ENCODE measurements at regions of chr6 and their contacts with region 1.

Region 1: DNA sequence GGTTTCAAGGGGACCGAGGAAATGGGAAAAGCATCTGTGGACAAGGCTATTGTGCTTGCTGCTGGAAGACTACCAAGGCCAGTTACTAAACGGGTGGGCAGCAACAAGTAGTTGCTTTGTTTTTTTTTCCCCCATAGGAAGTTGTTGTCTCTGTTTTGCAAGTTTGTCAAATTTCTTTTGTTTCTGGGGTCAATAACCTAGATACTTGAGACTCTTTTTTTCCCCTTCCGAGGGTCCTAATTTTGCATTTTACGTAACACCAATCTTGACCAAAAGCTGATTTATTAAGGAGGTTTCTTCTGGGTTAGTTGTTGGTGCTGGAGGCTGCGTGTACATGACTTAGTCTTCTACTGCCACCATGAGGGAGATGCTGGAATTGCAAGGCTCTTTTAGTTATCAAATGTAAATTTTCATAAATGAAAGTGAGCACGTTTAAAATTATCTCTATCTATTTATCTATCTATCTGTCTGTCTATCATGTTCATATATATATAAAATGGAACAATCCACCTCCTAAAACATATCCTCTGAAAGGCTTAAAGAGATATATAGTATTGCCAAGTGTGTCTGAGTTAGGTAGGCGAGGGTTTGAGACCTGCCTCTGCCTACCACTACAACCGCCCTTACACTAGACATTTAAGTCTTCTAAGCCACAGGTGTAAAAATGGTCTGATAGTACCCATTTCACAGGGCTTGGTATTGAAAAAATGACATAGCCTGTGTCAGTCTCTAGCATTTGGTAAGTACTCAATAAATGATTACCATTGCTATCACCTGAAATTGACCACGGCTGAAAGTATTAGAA is 60.2 kb downstream of the GCLC start:
- DNase-seq: peak in 1 of 2 experiments; percentile 67
- ATAC-seq: peak; percentile 68 to 72; a peak in 4 of 6 replicates
- H3K4me3 ChIP-seq: no peak overlapping the region
- H3K27ac ChIP-seq: no peak overlapping the region
- H3K4me1 ChIP-seq: no peaks in the 10 kb centered on the region
- CTCF ChIP-seq: peak; percentile 91
- EP300 ChIP-seq: no peak
- POLR2A ChIP-seq: no peak
- RAD21 ChIP-seq: peak; percentile 91 to 93

Region 2: GRCh38 chr6:53064726-53065215 is 419.9 kb before region 1 on chr6:
- CTCF ChIA-PET with region 1: interaction called, 15 read pairs
- POLR2A ChIA-PET with region 1: no interaction called
- DNase-seq: peak; percentile 85 to 96
- ATAC-seq: peak; percentile 77 to 85
- H3K4me3 ChIP-seq: peak overlapping the region; percentile 93
- H3K27ac ChIP-seq: peak overlapping the region; percentile 95 to 97
- H3K4me1 ChIP-seq: peaks cover 30% of the 10 kb centered on the region
- CTCF ChIP-seq: no peak
- EP300 ChIP-seq: no peak
- POLR2A ChIP-seq: no peak
- RAD21 ChIP-seq: no peak

Region 3: GRCh38 chr6:53103992-53104675 is 380.5 kb before region 1 on chr6:
- CTCF ChIA-PET with region 1: interaction called, 15 read pairs
- POLR2A ChIA-PET with region 1: no interaction called
- DNase-seq: peak in 1 of 2 experiments; percentile 22
- ATAC-seq: peak; percentile 56 to 64; a peak in 3 of 6 replicates
- H3K4me3 ChIP-seq: no peak overlapping the region
- H3K27ac ChIP-seq: no peak overlapping the region
- H3K4me1 ChIP-seq: no peaks in the 10 kb centered on the region
- CTCF ChIP-seq: peak; percentile 36
- EP300 ChIP-seq: no peak
- POLR2A ChIP-seq: no peak
- RAD21 ChIP-seq: peak; percentile 51 to 53; a peak in 4 of 5 replicates

Region 4: GRCh38 chr6:53171605-53172446 is 312.9 kb before region 1 on chr6:
- CTCF ChIA-PET with region 1: interaction called, 92 read pairs
- POLR2A ChIA-PET with region 1: no interaction called
- DNase-seq: peak; percentile 33 to 75
- ATAC-seq: peak; percentile 85 to 90
- H3K4me3 ChIP-seq: no peak overlapping the region
- H3K27ac ChIP-seq: no peak overlapping the region
- H3K4me1 ChIP-seq: peaks cover 7% of the 10 kb centered on the region; the same call in 1 of the 3 replicates
- CTCF ChIP-seq: peak; percentile 99
- EP300 ChIP-seq: no peak
- POLR2A ChIP-seq: no peak
- RAD21 ChIP-seq: peak; percentile 99

Region 5: DNA sequence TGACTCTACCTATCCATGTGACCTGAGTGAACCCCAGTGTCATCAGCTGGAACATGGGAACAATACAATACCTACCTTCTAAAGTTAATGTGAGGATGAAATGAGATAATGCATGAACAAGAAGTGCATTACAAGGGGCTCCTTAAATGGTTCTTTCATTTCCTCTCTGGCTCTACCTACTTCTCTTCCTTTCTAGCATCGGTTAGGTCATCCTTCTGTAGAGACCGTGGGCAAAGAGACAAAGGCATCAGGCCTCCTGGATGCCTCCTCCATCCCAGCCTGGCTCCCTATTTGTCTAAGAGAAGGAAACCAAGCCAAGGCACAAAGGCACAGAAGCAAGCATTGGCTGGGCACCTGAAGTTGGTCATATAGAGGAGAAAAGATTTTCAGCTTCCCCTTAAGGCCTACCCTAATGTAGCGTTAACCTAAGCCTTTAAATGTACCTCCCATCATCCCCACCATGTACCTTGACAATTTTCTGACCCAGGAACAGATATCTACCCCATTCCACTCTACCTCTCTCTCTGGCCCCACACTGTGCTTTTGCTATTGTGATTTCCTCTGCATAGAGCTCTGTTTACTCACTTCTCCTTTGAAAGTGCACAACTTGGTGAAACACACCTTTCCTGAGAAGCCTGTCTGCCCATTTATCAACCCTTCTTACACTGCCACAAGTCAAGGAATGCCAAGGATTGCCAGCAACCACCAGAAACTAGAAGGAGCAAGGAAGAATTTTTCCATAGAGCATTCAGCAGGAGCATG is 26.4 kb before region 1 on chr6:
- CTCF ChIA-PET with region 1: interaction called, 10 read pairs
- POLR2A ChIA-PET with region 1: no interaction called
- DNase-seq: no peak
- ATAC-seq: no peak
- H3K4me3 ChIP-seq: no peak overlapping the region
- H3K27ac ChIP-seq: no peak overlapping the region
- H3K4me1 ChIP-seq: no peaks in the 10 kb centered on the region
- CTCF ChIP-seq: no peak
- EP300 ChIP-seq: no peak
- POLR2A ChIP-seq: no peak
- RAD21 ChIP-seq: no peak

Region 6: GRCh38 chr6:53474010-53474409 is 10.7 kb before region 1 on chr6:
- CTCF ChIA-PET with region 1: interaction called, 10 read pairs
- POLR2A ChIA-PET with region 1: no interaction called
- DNase-seq: no peak
- ATAC-seq: no peak
- H3K4me3 ChIP-seq: no peak overlapping the region
- H3K27ac ChIP-seq: no peak overlapping the region
- H3K4me1 ChIP-seq: no peaks in the 10 kb centered on the region
- CTCF ChIP-seq: no peak
- EP300 ChIP-seq: no peak
- POLR2A ChIP-seq: no peak
- RAD21 ChIP-seq: no peak

Region 7: GRCh38 chr6:53701333-53702218 is 216.9 kb after region 1 on chr6:
- CTCF ChIA-PET with region 1: no interaction called
- POLR2A ChIA-PET with region 1: no interaction called
- DNase-seq: no peak
- ATAC-seq: no peak
- H3K4me3 ChIP-seq: no peak overlapping the region
- H3K27ac ChIP-seq: no peak overlapping the region
- H3K4me1 ChIP-seq: no peaks in the 10 kb centered on the region
- CTCF ChIP-seq: no peak
- EP300 ChIP-seq: no peak
- POLR2A ChIP-seq: no peak
- RAD21 ChIP-seq: no peak

Measured in A549 (cell line).